Stomach (tissue), 19 donors: ENCODE measurements at regions of chr17 and their contacts with region 1.

Region 1: GRCh38 chr17:64155751-64156544 is 26.0 kb upstream of the ERN1 start:
- DNase-seq: peak; percentile 77 to 85
- H3K4me3 ChIP-seq: no peak overlapping the region
- H3K27ac ChIP-seq: peak overlapping the region; percentile 76 to 82 (median 78)
- H3K4me1 ChIP-seq: peaks cover 26 to 58% (median 40%) of the 10 kb centered on the region in 4 donors
- H3K27me3 ChIP-seq: no peaks in the 10 kb centered on the region
- CTCF ChIP-seq: no peak
- EP300 ChIP-seq: no peak
- POLR2A ChIP-seq: no peak

Region 2: DNA sequence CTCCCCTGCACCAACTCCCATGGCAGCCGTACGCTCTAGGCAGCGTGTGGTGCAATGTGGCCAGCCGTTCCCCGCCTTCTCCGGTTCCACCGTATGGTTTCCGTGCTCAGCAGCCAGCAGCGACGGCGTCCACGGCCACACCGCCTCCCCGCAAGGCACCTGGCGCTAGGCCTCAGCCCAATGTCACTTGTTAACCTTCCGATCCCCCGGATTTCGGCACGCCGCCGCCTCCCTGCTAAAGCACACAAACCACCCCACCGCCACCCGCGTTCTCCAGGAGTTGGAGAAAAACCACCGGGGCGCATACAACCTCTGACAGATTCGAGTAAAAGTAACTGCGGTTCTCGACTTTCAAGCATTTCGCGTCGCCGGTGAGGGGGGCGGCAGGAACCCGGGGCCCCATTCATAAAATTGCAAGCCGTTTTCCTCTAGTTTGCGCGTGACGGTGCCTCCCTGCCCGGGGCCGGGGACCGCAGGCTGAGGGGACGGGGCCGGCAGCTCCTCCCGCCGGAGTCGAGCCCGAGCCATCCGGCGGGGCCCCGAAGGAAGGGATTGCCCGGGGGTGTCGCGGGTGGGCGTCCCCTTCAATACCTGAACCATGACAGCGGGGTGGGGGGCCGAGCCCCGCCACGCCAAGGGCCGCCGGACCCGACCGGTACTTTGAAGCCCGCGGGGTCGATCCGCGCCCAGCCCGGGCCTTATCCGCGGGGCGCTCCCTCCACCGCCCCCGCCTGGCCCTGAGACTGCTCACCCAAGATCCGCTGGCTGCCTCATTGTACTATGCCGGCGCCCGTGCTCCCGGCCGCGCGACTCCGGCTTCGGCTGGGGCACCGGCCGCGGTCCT is 106.7 kb after region 1 on chr17 and contains the start of gene TEX2:
- intact Hi-C with region 1: loop called (anchors 10 kb)
- DNase-seq: peak; percentile 80 to 81
- H3K4me3 ChIP-seq: peak within 1 kb of the TSS; percentile 95 to 99 (median 98)
- H3K27ac ChIP-seq: peak within 1 kb of the TSS; percentile 92 to 99 (median 95)
- H3K4me1 ChIP-seq: peaks cover 19 to 45% (median 29%) of the 10 kb centered on the region in 4 donors
- H3K27me3 ChIP-seq: no peaks in the 10 kb centered on the region
- CTCF ChIP-seq: no peak
- EP300 ChIP-seq: no peak
- POLR2A ChIP-seq: peak in 1 of 4 donors; percentile 21
- total RNA-seq, gene TEX2: 17.5 to 50.6 (median 40.0) TPM

Region 3: DNA sequence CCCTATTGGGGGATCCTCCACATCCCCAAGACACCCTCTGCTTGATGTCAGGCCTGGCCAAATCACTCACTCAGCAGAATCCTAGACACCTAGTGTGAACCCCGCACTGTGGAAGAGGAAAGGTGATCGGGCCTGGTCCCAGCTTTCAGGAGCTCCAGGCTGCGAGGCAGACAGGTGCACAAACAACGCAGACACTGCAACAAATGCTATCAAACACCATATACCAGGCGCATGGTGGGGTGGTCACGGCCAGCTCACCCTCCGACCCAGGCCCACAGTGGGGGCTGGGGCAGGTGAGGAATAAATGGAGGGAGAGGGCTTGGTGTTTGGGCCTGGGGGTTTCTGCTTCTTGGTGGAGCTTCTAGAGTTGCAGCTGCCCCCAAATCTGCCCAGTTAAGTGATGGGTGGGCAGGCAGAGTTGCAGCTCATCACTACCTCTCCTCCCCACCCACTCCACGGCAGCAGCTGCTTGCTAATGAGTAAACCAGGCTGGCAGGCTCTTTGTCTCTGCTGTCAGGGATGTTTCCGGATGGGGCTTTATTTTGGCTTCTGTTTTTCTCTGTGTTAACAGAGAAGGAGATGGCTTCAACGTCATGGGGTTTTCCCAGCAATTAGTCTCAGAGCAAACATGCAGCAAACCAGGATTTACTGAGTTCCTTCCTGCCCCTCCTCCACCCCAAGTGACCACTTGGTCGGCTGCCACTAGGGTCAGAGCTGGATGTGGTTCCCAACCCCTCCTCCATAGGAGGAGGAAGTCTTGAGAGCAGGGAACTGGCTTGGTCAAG is 188.1 kb after region 1 on chr17:
- intact Hi-C with region 1: no loop called
- DNase-seq: peak; percentile 53 to 91
- H3K4me3 ChIP-seq: no peak overlapping the region
- H3K27ac ChIP-seq: peak overlapping the region; percentile 16 to 77 (median 57)
- H3K4me1 ChIP-seq: peaks cover 11 to 58% (median 23%) of the 10 kb centered on the region in 4 donors
- H3K27me3 ChIP-seq: no peaks in the 10 kb centered on the region
- CTCF ChIP-seq: no peak
- EP300 ChIP-seq: no peak
- POLR2A ChIP-seq: no peak